ENCODE measurements at regions of chr19 and their contacts with region 1.

Region 1: GRCh38 chr19:8334458-8335342 is 8.4 kb downstream of the KANK3 start:
- DNase-seq: peak; percentile 78
- ATAC-seq: peak; percentile 53
- H3K4me3 Mint-ChIP-seq: peak overlapping the region; percentile 70
- H3K27ac Mint-ChIP-seq: no peak overlapping the region
- H3K4me1 Mint-ChIP-seq: peaks cover 19% of the 10 kb centered on the region
- H3K27me3 Mint-ChIP-seq: peaks cover 75% of the 10 kb centered on the region
- CTCF ChIP-seq: no peak

Region 2: GRCh38 chr19:8304841-8305621 is 29.7 kb before region 1 on chr19:
- CTCF ChIA-PET with region 1: interaction called, 18 read pairs
- POLR2A ChIA-PET with region 1: no interaction called
- DNase-seq: peak; percentile 90
- ATAC-seq: peak; percentile 77
- H3K4me3 Mint-ChIP-seq: no peak overlapping the region; the same call in 1 of the 2 replicates
- H3K27ac Mint-ChIP-seq: peak overlapping the region; percentile 78
- H3K4me1 Mint-ChIP-seq: peaks cover 33% of the 10 kb centered on the region
- H3K27me3 Mint-ChIP-seq: no peaks in the 10 kb centered on the region
- CTCF ChIP-seq: no peak

Region 3: DNA sequence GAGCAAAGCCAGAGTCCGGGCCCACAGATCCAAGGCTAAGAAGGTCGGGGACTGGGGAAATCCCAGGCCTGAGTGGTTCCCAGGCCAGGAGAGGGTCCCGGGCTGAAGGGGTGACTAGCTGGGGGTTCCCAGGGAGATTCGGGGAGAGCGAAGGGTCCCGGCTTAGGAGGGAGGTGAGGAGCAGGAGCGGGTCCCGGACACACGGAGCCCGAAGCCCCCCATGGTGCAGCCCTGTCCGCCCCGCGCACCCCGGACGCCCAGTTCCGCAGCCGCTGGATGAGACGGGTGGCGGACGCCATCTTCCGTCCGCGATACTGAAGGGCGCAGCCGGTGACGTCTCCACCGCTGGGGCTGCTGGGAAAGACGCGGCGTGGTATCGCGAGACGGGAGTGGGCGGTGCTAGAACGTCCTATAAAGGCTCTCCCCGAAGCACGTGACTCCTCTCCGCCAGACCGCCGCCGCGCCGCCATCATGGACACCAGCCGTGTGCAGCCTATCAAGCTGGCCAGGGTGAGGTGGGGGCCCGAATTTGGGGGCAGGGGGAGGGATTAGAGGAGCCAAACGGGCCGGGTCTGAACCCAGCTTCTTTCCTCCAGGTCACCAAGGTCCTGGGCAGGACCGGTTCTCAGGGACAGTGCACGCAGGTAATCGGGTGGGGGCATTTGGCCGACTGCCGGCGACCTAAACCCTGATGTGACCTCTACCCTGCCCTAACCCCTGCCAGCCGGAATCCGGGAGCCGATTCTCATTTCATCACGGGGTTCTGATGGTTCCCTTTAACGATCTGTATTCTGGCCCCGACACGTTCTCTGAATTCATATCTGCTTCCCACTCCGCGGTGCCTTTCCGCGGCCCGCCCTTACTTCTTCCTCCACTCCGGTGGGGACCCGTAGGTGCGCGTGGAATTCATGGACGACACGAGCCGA is 13.4 kb before region 1 on chr19 and contains the starts of genes NDUFA7 and RPS28:
- CTCF ChIA-PET with region 1: interaction called, 25 read pairs
- POLR2A ChIA-PET with region 1: interaction called, 3 read pairs
- DNase-seq: peak; percentile 98
- ATAC-seq: peak; percentile 65
- H3K4me3 Mint-ChIP-seq: peak within 1 kb of the TSS; percentile 97
- H3K27ac Mint-ChIP-seq: peak within 1 kb of the TSS; percentile 98
- H3K4me1 Mint-ChIP-seq: peaks cover 36% of the 10 kb centered on the region
- H3K27me3 Mint-ChIP-seq: no peaks in the 10 kb centered on the region; the same call in 1 of the 2 replicates
- CTCF ChIP-seq: no peak
- total RNA-seq, gene NDUFA7: 76.4 to 101 TPM (median 91.9 TPM) in 3 replicates
- total RNA-seq, gene RPS28: 2,082 to 2,373 TPM (median 2,292 TPM) in 3 replicates

Measured in WTC11 (cell line).